Activated CD4-positive, alpha-beta memory T cell treated with anti-CD3 and anti-CD28 coated beads, Interleukin-2, amount 10 ng/mL, durations not matched to agents 7 days and 5 days (primary cell): ENCODE measurements at regions of chr9 and their contacts with region 1.

Region 1: GRCh38 chr9:129610473-129611301 is 10.2 kb downstream of the C9orf50 start:
- DNase-seq: peak; percentile 74
- H3K4me3 Mint-ChIP-seq: peak overlapping the region; percentile 64
- H3K27ac Mint-ChIP-seq: peak overlapping the region; percentile 40
- H3K4me1 Mint-ChIP-seq: peaks cover 42% of the 10 kb centered on the region
- H3K27me3 Mint-ChIP-seq: no peaks in the 10 kb centered on the region

Region 2: GRCh38 chr9:129597355-129598088 is 13.2 kb before region 1 on chr9:
- CTCF ChIA-PET with region 1: interaction called, 3 read pairs
- POLR2A ChIA-PET with region 1: interaction called, 11 read pairs
- DNase-seq: peak; percentile 64
- H3K4me3 Mint-ChIP-seq: peak overlapping the region; percentile 52
- H3K27ac Mint-ChIP-seq: peak overlapping the region; percentile 12
- H3K4me1 Mint-ChIP-seq: peaks cover 35% of the 10 kb centered on the region
- H3K27me3 Mint-ChIP-seq: peaks cover 30% of the 10 kb centered on the region